ENCODE measurements at regions of chr16 and their contacts with region 1.

Region 1: DNA sequence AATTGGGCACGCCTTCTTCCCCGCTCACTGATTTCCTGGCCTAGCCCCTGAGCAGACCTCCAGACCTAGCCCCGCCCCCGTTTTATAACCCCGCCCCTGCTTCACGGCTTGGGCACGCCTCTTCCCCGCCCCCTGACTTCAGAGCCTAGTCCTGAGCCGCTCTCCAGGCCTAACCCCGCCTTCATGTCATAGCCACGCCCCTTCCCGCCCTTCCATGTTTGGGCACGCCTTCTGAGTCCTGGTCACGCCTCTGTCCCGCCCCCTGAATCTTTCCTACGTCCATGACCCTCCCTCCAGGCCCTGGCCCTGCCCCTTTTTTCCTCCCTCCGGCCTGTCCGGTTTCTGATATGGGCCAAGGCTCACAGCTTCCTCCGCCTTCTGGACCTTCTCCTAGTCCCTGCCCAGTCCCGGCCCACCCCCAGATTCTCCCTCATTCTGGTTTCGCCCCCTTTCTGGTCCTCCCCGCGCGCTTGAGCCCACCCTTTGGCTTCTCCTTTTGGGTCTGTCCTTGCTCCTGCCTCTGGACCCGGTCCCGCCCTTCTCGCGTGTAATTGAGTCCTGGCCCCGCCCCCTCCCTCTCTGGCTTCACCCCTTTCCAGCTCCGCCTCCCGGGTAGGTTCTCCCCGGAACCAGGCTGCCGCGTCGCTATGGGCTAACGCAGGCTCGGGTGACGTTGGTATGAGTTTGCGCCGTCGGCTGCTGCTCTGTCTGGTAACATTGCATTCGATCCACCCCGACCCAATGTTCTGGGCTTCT is 15.1 kb upstream of the EEF2K start:
- DNase-seq: peak; percentile 99
- H3K4me3 Mint-ChIP-seq: peak overlapping the region; percentile 87
- H3K27ac Mint-ChIP-seq: peak overlapping the region; percentile 99
- H3K4me1 Mint-ChIP-seq: peaks cover 55% of the 10 kb centered on the region
- H3K27me3 Mint-ChIP-seq: peaks cover 1% of the 10 kb centered on the region

Region 2: DNA sequence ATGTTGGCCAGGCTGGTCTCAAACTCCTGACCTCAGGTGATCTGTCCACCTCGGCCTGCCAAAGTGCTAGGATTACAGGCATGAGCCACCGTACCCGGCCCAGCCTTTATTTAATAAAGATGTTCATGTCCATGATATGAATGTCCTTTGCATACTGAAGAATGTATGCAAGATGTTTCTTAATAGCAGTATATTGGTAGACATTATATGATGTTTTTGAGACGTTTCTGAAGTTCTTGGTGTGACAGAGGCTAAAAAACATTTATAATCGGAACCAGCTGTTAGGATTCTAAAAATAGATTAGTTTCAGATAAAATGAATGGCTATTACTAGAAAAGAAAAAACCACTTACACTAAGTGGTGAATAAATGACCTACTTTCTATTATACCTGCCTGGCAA is 201.8 kb before region 1 on chr16:
- CTCF ChIA-PET with region 1: interaction called, 11 read pairs
- POLR2A ChIA-PET with region 1: interaction called, 5 read pairs
- DNase-seq: no peak
- H3K4me3 Mint-ChIP-seq: no peak overlapping the region
- H3K27ac Mint-ChIP-seq: no peak overlapping the region
- H3K4me1 Mint-ChIP-seq: peaks cover 41% of the 10 kb centered on the region
- H3K27me3 Mint-ChIP-seq: no peaks in the 10 kb centered on the region

Region 3: DNA sequence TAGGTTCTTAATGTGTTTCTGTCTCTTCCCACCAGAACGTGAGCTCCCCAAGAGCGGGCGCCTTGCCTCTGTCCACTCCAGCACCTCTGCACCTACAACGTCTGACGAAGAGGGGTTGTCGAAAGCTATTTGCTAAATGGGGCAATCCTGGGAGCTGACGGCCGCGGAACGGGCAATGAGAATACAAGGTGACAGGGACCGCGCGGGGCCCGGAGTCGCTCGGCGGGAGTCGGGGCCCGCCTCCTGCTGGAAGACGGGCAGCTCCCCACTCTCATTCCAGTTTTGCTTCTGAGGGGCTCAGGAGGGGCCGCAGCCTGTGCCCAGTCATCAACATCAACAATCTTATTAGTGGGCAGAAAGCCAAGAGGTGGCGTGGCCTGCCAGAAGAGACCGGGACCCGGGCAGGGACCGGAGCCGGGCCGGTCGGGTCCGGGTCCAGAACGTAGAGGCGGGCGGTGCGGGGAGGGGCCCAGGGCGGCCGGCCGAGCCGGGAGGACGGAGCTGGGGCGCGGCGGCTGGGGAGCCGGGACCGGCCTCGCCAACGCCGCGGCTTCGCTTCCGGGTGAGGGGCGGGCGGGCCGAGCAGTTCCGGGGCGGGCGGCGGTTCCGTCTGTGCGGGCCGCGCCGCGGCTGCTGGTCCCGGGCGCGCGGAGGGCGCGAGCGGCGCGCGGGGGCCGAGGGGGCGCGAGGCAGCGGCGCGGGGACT is 183.3 kb before region 1 on chr16 and contains the start of gene MOSMO:
- CTCF ChIA-PET with region 1: interaction called, 79 read pairs
- POLR2A ChIA-PET with region 1: interaction called, 40 read pairs
- DNase-seq: peak; percentile 69
- H3K4me3 Mint-ChIP-seq: peak within 1 kb of the TSS; percentile 83
- H3K27ac Mint-ChIP-seq: peak within 1 kb of the TSS; percentile 49
- H3K4me1 Mint-ChIP-seq: peaks cover 34% of the 10 kb centered on the region
- H3K27me3 Mint-ChIP-seq: no peaks in the 10 kb centered on the region
- total RNA-seq, gene MOSMO: 12.1 to 13.0 TPM

Region 4: DNA sequence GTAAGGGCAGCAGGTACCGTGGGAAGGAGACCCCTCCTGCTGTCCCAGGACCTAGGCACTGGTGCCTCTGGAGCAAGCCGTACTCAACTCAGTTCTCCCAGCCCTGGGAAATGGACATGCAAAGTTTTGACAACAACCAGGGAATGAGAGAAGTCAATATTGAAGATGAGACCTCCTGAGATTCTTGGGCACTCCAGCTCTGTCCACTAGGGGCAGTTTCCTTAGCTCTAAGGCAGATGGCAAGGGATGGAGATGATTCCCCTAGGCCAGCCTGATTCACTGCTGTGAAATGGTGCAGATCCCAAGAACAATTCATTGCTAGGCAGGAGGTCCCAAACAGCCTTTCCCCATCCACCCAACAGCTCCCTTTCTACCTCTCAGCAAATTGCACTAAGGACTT is 49.2 kb before region 1 on chr16:
- CTCF ChIA-PET with region 1: interaction called, 10 read pairs
- POLR2A ChIA-PET with region 1: no interaction called
- DNase-seq: no peak
- H3K4me3 Mint-ChIP-seq: no peak overlapping the region
- H3K27ac Mint-ChIP-seq: no peak overlapping the region
- H3K4me1 Mint-ChIP-seq: no peaks in the 10 kb centered on the region
- H3K27me3 Mint-ChIP-seq: peaks cover 5% of the 10 kb centered on the region

Region 5: DNA sequence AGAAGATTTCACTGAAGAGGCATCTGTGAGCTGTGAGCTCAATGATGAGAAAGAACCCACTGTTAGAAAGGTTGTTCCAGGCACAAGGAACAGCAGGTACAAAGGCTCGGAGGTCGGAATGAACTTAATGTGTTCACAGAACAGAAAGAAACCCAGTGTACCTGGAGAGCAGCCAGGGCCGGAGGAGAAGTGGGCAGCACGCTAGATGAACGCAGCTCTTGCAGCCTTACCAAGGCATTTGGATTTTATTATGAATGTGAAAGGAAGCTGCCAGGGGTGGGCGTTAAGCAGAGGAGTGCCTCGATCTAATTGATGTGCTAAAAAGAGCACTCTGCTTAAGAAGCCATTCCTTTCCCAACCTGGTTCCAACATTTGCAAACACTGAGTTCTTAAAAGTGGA is 34.1 kb after region 1 on chr16:
- CTCF ChIA-PET with region 1: no interaction called
- POLR2A ChIA-PET with region 1: no interaction called
- DNase-seq: no peak
- H3K4me3 Mint-ChIP-seq: no peak overlapping the region
- H3K27ac Mint-ChIP-seq: no peak overlapping the region
- H3K4me1 Mint-ChIP-seq: no peaks in the 10 kb centered on the region
- H3K27me3 Mint-ChIP-seq: no peaks in the 10 kb centered on the region

Region 6: GRCh38 chr16:22297114-22297878 is 106.3 kb after region 1 on chr16 and contains the start of gene POLR3E:
- CTCF ChIA-PET with region 1: interaction called, 183 read pairs
- POLR2A ChIA-PET with region 1: interaction called, 71 read pairs
- DNase-seq: peak; percentile 100
- H3K4me3 Mint-ChIP-seq: peak within 1 kb of the TSS; percentile 91
- H3K27ac Mint-ChIP-seq: peak within 1 kb of the TSS; percentile 98
- H3K4me1 Mint-ChIP-seq: peaks cover 41% of the 10 kb centered on the region
- H3K27me3 Mint-ChIP-seq: no peaks in the 10 kb centered on the region
- total RNA-seq, gene POLR3E: 50.7 TPM

Region 7: DNA sequence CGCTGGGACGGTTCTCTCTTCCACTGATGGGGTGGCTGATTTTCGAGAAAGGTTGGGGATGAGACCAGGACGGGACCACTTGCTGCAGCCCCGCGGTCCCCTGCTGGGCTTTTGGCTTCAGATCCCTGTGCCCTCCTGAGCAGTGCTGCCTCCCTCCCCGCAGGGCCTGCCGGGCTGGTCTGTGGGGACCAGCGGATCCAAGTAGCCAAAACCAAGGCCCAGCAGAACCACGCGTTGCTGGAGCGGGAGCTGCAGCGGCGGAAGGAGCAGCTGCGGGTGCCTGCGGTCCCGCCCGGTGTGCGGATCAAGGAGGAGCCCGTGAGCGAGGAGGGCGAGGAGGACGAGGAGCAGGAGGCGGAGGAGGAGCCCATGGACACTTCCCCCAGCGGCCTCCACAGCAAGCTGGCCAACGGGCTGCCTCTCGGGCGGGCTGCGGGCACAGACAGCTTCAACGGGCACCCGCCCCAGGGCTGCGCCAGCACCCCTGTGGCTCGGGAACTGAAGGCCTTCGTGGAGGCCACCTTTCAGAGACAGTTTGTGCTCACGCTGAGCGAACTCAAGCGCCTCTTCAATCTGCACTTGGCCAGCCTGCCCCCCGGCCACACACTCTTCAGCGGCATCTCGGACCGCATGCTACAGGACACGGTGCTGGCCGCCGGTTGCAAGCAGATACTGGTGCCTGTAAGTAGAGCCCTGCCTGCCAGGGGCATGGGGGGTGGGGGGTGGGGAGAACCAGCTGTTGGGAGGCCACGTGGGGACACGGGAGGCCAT is 134.8 kb after region 1 on chr16:
- CTCF ChIA-PET with region 1: no interaction called
- POLR2A ChIA-PET with region 1: no interaction called
- DNase-seq: peak; percentile 11
- H3K4me3 Mint-ChIP-seq: no peak overlapping the region
- H3K27ac Mint-ChIP-seq: no peak overlapping the region
- H3K4me1 Mint-ChIP-seq: peaks cover 4% of the 10 kb centered on the region
- H3K27me3 Mint-ChIP-seq: no peaks in the 10 kb centered on the region

Measured in activated CD4-positive, alpha-beta memory T cell treated with anti-CD3 and anti-CD28 coated beads, Interleukin-2, amount 10 ng/mL, durations not matched to agents 7 days and 5 days (primary cell).